Endothelial cell of umbilical vein (primary cell): ENCODE measurements at regions of chr11 and their contacts with region 1.

Region 1: GRCh38 chr11:117143871-117144476 is at the start of gene PAFAH1B2:
- DNase-seq: peak; percentile 90
- H3K4me3 ChIP-seq: peak within 1 kb of the TSS; percentile 79 to 95 (median 90)
- H3K27ac ChIP-seq: peak within 1 kb of the TSS; percentile 33
- H3K4me1 ChIP-seq: peaks cover 11% of the 10 kb centered on the region
- H3K27me3 ChIP-seq: no peaks in the 10 kb centered on the region
- CTCF ChIP-seq: no peak
- POLR2A ChIP-seq: peak; percentile 91
- total RNA-seq, gene PAFAH1B2: 128 and 130 TPM in 2 replicates

Region 2: GRCh38 chr11:116772443-116773202 is 371.4 kb before region 1 on chr11 and contains the start of gene BUD13:
- CTCF ChIA-PET with region 1: no interaction called
- POLR2A ChIA-PET with region 1: interaction called, 6 read pairs
- dilution Hi-C with region 1: no loop called
- intact Hi-C with region 1: loop called (anchors 1 kb)
- DNase-seq: peak; percentile 86
- H3K4me3 ChIP-seq: peak within 1 kb of the TSS; percentile 65 to 97 (median 96)
- H3K27ac ChIP-seq: peak within 1 kb of the TSS; percentile 89
- H3K4me1 ChIP-seq: peaks cover 12% of the 10 kb centered on the region
- H3K27me3 ChIP-seq: no peaks in the 10 kb centered on the region
- CTCF ChIP-seq: no peak
- POLR2A ChIP-seq: peak; percentile 84
- total RNA-seq, gene BUD13: 21.8 and 22.2 TPM in 2 replicates

Region 3: DNA sequence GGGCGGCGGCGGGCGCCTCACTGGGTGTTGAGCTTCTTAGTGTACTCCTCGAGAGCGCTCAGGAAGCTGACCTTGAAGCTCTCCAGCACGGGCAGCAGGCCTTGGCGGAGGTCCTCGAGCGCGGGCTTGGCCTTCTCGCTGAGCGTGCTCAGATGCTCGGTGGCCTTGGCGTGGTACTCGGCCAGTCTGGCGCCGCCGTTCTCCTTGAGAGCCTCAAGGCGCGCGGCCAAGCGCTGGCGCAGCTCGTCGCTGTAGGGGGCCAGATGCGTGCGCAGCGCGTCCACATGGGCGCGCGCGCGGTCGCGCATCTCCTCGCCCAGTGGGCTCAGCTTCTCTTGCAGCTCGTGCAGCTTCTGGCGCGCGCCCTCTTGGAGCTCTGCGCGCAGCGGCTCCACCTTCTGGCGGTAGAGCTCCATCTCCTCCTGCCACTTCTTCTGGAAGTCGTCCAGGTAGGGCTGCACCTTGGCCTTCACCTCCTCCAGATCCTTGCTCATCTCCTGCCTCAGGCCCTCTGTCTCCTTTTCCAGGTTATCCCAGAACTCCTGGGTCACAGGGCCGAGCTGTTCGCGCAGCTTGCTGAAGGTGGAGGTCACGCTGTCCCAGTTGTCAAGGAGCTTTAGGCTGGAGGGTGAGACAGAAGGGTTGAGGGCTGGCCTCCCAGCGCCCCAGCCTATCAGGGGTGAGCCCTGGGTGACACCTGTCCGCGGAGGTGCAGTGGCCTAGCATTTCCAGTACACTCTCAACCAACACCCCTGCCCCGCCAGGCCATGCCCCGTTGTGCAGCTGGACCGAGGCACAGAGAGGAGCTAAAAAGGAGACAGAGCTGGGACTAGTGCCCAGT is 308.0 kb before region 1 on chr11:
- CTCF ChIA-PET with region 1: interaction called, 12 read pairs
- POLR2A ChIA-PET with region 1: no interaction called
- dilution Hi-C with region 1: no loop called
- intact Hi-C with region 1: no loop called
- DNase-seq: peak; percentile 94
- H3K4me3 ChIP-seq: peak overlapping the region; percentile 1 to 32 (median 15)
- H3K27ac ChIP-seq: no peak overlapping the region
- H3K4me1 ChIP-seq: peaks cover 6% of the 10 kb centered on the region
- H3K27me3 ChIP-seq: no peaks in the 10 kb centered on the region
- CTCF ChIP-seq: peak; percentile 56 to 81
- POLR2A ChIP-seq: no peak

Region 4: DNA sequence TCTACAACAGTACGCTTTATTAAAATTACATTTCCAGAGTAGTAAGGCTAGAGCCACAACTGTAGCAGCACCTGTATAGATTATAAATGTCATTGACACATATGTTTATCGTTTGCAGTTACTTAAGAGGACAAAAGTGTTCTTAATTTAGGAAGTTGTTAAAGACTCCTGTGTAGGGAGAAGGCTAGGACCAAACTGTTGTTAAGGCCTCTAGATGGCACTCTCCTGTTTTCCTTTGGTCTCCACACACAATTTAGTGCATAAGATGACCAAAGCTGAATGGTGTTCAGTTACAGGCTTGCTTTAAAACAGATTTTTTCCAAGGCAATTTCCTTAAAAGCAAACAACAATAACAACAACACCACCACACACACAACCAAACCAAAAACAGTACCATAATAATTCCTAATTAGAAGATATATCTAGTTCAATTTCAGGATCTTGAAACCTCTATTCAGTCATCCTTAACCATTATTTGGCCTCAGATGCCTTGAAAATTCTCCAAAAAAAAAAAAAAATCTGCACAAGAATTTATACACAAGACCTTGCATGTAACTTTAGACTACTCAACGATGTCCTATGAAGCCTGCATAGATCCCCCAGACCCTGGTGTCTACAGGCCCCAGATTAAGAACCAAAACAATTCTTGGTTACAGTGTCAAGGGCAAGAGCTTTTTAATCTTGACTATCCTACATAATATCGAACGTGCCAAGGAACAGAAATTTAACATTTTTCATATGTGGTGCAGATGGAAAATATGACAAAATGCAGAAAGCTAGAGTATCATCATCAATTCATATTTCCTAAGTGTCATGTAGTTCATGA is 264.0 kb before region 1 on chr11:
- CTCF ChIA-PET with region 1: interaction called, 10 read pairs
- POLR2A ChIA-PET with region 1: no interaction called
- dilution Hi-C with region 1: no loop called
- intact Hi-C with region 1: no loop called
- DNase-seq: peak; percentile 76
- H3K4me3 ChIP-seq: no peak overlapping the region
- H3K27ac ChIP-seq: no peak overlapping the region
- H3K4me1 ChIP-seq: no peaks in the 10 kb centered on the region
- H3K27me3 ChIP-seq: no peaks in the 10 kb centered on the region
- CTCF ChIP-seq: peak; percentile 55 to 68
- POLR2A ChIP-seq: no peak

Region 5: GRCh38 chr11:117020287-117020686 is 123.7 kb before region 1 on chr11:
- CTCF ChIA-PET with region 1: no interaction called
- POLR2A ChIA-PET with region 1: no interaction called
- dilution Hi-C with region 1: no loop called
- intact Hi-C with region 1: no loop called
- DNase-seq: no peak
- H3K4me3 ChIP-seq: no peak overlapping the region
- H3K27ac ChIP-seq: no peak overlapping the region
- H3K4me1 ChIP-seq: peaks cover 10% of the 10 kb centered on the region
- H3K27me3 ChIP-seq: no peaks in the 10 kb centered on the region
- CTCF ChIP-seq: no peak
- POLR2A ChIP-seq: no peak

Region 6: DNA sequence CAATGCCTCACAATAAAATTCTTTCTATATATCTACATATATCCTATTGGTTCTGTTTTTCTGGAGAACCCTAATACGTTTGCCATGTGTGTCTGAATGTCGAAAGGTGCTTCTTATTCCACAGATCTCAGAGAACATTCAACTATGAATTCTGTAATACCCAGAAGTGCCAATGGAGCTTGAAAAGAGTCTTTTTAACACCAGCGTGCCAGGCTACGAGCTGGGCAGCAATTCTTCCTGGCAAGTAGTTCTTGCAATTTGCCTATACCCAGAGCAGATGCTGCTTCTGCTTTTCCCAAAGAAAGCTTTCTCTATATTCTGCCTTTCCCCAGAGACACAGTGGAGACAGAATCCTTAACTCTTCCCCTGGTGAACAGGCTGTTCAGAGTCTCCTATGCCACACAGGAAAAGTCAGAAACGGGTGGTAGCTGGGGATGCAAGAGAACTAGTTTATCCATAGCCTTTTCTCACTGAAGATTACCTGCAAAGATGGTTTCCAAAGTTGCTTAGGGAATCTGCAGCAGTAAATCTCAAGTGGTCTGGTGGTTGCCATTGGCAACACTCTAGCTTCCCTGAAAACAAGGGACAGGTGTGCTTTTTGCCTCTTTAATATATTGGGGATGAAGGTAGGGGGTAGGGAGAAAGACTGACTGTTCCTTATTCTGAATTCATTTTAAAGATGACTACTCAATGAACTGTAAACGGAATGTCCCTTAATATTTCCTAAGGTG is 16.6 kb before region 1 on chr11:
- CTCF ChIA-PET with region 1: no interaction called
- POLR2A ChIA-PET with region 1: no interaction called
- dilution Hi-C with region 1: no loop called
- intact Hi-C with region 1: no loop called
- DNase-seq: no peak
- H3K4me3 ChIP-seq: no peak overlapping the region
- H3K27ac ChIP-seq: no peak overlapping the region
- H3K4me1 ChIP-seq: no peaks in the 10 kb centered on the region
- H3K27me3 ChIP-seq: peaks cover 8 to 9% of the 10 kb centered on the region in 2 experiments
- CTCF ChIP-seq: no peak
- POLR2A ChIP-seq: no peak

Region 7: GRCh38 chr11:117171404-117172061 is 27.6 kb after region 1 on chr11:
- CTCF ChIA-PET with region 1: interaction called, 15 read pairs
- POLR2A ChIA-PET with region 1: interaction called, 7 read pairs
- dilution Hi-C with region 1: no loop called
- intact Hi-C with region 1: no loop called
- DNase-seq: no peak
- H3K4me3 ChIP-seq: no peak overlapping the region
- H3K27ac ChIP-seq: no peak overlapping the region
- H3K4me1 ChIP-seq: peaks cover 14% of the 10 kb centered on the region
- H3K27me3 ChIP-seq: no peaks in the 10 kb centered on the region
- CTCF ChIP-seq: no peak
- POLR2A ChIP-seq: no peak

Region 8: GRCh38 chr11:117366248-117366647 is 222.3 kb after region 1 on chr11:
- CTCF ChIA-PET with region 1: no interaction called
- POLR2A ChIA-PET with region 1: no interaction called
- dilution Hi-C with region 1: no loop called
- intact Hi-C with region 1: no loop called
- DNase-seq: no peak
- H3K4me3 ChIP-seq: no peak overlapping the region
- H3K27ac ChIP-seq: no peak overlapping the region
- H3K4me1 ChIP-seq: no peaks in the 10 kb centered on the region
- H3K27me3 ChIP-seq: no peaks in the 10 kb centered on the region
- CTCF ChIP-seq: no peak
- POLR2A ChIP-seq: no peak